Activated CD8-positive, alpha-beta T cell treated with anti-CD3 and anti-CD28 coated beads for 36 hours (primary cell): ENCODE measurements at regions of chr16 and their contacts with region 1.

Region 1: DNA sequence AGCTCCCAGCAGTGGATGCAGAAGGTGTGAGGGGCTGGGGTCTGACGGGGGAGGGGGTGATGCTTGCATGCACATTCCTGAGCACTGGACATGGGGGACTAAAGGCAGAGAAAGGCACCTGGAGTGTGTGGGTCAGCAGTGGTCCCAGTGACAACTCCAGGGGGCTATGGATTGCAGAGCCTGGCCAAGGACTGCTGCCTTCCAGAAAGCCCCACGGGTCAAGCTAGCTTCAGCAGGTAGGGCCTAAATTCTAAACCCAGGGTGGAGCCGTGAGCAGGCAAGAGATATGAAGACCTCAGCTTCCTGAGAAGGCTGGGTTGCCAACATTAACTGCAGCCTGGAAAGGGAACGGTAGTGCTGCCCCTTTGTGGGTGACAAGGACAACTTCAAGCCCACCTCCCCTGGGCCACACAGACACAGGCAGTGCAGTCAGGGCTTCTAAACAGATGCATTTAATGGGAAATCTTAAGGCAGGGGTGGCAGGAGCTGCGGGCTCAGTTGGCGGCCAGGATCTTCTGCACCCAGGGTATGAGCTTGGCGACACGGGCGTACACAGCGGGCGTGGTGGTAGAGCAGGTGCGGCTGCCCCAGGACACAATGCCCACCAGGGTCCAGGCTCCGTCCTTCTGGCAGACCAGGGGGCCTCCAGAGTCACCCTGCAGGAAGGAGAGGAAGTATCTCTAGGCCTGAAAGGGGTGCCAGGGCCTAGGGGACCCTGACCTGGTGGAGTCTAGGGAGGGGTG is 3.1 kb downstream of the CTRB2 start:
- DNase-seq: no peak
- ATAC-seq: no peak
- H3K4me3 Mint-ChIP-seq: no peak overlapping the region
- H3K27ac Mint-ChIP-seq: no peak overlapping the region
- H3K4me1 Mint-ChIP-seq: peaks cover 13% of the 10 kb centered on the region
- H3K27me3 Mint-ChIP-seq: no peaks in the 10 kb centered on the region
- CTCF ChIP-seq: no peak

Region 2: DNA sequence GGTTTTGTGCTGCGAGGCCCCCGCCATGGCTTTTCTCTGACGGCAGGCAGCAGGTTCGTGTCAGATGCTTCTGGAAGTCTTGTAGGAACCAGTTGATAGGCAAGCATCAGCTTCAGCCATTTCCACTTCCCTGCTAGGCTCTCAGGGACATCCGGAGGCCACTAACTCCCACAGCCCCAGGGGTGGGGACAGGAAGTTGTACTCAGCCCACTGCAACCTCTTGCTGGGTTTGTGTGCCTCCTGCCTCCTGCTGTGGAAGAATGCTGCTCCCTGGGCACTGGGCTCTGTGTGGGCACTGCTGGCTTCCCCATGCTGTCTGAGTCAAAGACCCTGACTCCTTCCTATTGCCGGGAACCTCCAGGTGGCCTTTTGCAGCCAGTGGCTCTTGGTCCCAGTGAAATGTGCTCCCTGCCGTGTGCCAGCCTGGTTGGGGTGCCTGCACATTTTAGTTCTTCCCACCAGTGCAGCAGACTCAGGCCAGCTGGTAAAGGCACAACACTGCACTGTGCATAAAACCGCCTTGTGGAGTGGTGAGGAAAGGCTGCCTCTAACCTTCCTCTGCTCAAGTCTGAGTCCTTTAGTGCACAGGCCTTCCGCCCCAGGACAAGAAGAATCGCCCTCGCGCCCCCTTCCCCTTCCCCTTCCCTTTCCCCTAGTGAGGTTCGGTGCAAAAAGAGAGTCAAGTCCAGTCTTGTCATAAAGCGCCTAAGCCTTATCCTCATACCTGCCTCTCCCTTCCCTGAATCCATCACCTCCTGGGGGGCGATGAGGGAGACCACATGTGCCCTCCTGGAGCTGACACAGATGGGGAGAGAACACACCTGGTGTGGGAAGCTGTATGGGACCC is 103.9 kb before region 1 on chr16:
- CTCF ChIA-PET with region 1: no interaction called
- POLR2A ChIA-PET with region 1: no interaction called
- intact Hi-C with region 1: no loop called
- DNase-seq: peak; percentile 72
- ATAC-seq: peak; percentile 52
- H3K4me3 Mint-ChIP-seq: peak overlapping the region; percentile 24
- H3K27ac Mint-ChIP-seq: peak overlapping the region; percentile 92
- H3K4me1 Mint-ChIP-seq: peaks cover 54% of the 10 kb centered on the region
- H3K27me3 Mint-ChIP-seq: no peaks in the 10 kb centered on the region
- CTCF ChIP-seq: no peak

Region 3: GRCh38 chr16:75218256-75219070 is 14.6 kb after region 1 on chr16 and contains the start of gene CTRB1:
- CTCF ChIA-PET with region 1: interaction called, 62 read pairs
- POLR2A ChIA-PET with region 1: no interaction called
- intact Hi-C with region 1: loop called (anchors 1 kb)
- DNase-seq: peak; percentile 43
- ATAC-seq: peak; percentile 45
- H3K4me3 Mint-ChIP-seq: peak within 1 kb of the TSS; percentile 69
- H3K27ac Mint-ChIP-seq: peak within 1 kb of the TSS; percentile 82
- H3K4me1 Mint-ChIP-seq: peaks cover 21% of the 10 kb centered on the region
- H3K27me3 Mint-ChIP-seq: no peaks in the 10 kb centered on the region
- CTCF ChIP-seq: no peak
- total RNA-seq, gene CTRB1: not detected